ENCODE measurements at regions of chr2 and their contacts with region 1.

Region 1: GRCh38 chr2:142629193-142629592 is 248.3 kb upstream of the KYNU start:
- DNase-seq: no peak
- H3K4me3 ChIP-seq: no peak overlapping the region
- H3K27ac ChIP-seq: no peak overlapping the region
- H3K4me1 ChIP-seq: no peaks in the 10 kb centered on the region
- H3K27me3 ChIP-seq: no peaks in the 10 kb centered on the region
- CTCF ChIP-seq: no peak
- POLR2A ChIP-seq: no peak

Region 2: GRCh38 chr2:142572346-142573132 is 56.7 kb before region 1 on chr2:
- intact Hi-C with region 1: loop called (anchors 2 kb)
- DNase-seq: no peak
- H3K4me3 ChIP-seq: no peak overlapping the region
- H3K27ac ChIP-seq: no peak overlapping the region
- H3K4me1 ChIP-seq: no peaks in the 10 kb centered on the region
- H3K27me3 ChIP-seq: no peaks in the 10 kb centered on the region
- CTCF ChIP-seq: no peak
- POLR2A ChIP-seq: no peak

Region 3: GRCh38 chr2:142693171-142693950 is 64.2 kb after region 1 on chr2:
- intact Hi-C with region 1: no loop called
- DNase-seq: no peak
- H3K4me3 ChIP-seq: no peak overlapping the region
- H3K27ac ChIP-seq: no peak overlapping the region
- H3K4me1 ChIP-seq: no peaks in the 10 kb centered on the region
- H3K27me3 ChIP-seq: no peaks in the 10 kb centered on the region
- CTCF ChIP-seq: no peak
- POLR2A ChIP-seq: no peak

Region 4: DNA sequence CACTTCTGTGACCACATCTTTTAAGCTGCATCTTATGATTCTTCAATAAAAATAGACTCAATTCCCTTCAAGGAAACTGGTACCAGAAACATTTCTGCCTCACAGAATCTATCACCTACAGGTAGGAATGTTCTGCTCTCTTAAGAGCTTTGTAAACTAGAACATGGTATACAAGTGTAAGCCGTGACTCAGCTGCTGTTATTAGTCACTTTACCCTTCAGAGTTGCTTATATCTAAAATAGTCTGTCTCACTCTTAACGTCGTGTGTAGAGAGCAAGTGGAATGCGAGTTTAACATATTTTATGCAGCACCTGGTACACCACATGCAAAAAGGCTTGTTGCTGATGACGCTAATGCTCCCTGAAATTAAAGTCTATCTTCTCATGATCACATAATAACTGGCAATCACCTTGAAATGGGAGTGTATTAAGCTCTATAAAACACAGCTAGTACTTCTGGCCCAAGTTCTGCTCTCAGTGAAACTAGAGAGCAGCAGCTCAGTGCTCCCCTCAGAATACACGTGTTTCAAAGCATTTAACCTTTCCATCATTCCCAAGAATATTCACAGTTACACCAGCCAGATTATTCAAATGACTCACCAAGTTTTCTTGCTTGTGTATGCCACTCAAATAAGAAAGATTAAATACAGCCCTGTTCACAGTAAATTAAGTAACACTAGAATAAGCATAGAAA is 1470.7 kb after region 1 on chr2:
- intact Hi-C with region 1: no loop called
- DNase-seq: no peak
- H3K4me3 ChIP-seq: no peak overlapping the region
- H3K27ac ChIP-seq: no peak overlapping the region
- H3K4me1 ChIP-seq: no peaks in the 10 kb centered on the region
- H3K27me3 ChIP-seq: no peaks in the 10 kb centered on the region
- CTCF ChIP-seq: no peak
- POLR2A ChIP-seq: no peak

Measured in breast epithelium (tissue), 4 donors.